Activated naive CD4-positive, alpha-beta T cell treated with anti-CD3 and anti-CD28 coated beads, Interleukin-2, amount 10 ng/mL, durations not matched to agents 7 days and 5 days (primary cell): ENCODE measurements at regions of chr17 and their contacts with region 1.

Region 1: DNA sequence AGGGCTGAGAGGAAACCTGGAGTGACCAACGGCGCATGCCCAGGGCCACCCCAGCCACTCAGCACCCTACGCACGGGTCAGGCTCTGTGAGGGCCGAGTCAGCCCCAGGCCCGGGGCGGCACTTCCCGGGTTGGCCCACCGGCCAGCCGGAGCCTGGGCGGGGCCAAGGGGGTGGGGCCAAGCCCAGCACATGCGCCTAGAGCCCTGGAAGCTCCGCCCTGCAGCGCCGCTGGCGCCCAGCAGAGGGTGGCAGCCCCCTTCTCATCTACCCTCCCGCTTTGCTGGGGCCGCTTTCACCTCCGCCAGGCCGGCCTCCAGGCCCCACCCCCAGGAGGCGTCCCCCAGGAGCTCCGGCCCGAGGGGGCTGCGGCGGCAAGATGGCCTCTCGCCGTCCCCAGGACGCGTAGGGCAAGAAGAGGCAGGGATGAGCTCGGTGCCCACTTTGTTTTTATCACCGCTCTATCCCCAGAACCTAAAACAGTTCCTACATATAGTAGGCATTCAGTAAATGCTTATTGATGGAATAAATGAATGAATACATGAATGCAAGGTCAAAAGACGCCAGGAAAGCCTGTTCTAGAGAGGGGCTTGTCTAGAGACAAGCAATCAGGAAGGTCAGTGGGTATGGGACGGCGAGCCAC is 31.3 kb downstream of the MYO18A start:
- DNase-seq: peak; percentile 95
- H3K4me3 Mint-ChIP-seq: peak overlapping the region; percentile 66
- H3K27ac Mint-ChIP-seq: peak overlapping the region; percentile 76
- H3K4me1 Mint-ChIP-seq: peaks cover 56% of the 10 kb centered on the region
- H3K27me3 Mint-ChIP-seq: no peaks in the 10 kb centered on the region

Region 2: DNA sequence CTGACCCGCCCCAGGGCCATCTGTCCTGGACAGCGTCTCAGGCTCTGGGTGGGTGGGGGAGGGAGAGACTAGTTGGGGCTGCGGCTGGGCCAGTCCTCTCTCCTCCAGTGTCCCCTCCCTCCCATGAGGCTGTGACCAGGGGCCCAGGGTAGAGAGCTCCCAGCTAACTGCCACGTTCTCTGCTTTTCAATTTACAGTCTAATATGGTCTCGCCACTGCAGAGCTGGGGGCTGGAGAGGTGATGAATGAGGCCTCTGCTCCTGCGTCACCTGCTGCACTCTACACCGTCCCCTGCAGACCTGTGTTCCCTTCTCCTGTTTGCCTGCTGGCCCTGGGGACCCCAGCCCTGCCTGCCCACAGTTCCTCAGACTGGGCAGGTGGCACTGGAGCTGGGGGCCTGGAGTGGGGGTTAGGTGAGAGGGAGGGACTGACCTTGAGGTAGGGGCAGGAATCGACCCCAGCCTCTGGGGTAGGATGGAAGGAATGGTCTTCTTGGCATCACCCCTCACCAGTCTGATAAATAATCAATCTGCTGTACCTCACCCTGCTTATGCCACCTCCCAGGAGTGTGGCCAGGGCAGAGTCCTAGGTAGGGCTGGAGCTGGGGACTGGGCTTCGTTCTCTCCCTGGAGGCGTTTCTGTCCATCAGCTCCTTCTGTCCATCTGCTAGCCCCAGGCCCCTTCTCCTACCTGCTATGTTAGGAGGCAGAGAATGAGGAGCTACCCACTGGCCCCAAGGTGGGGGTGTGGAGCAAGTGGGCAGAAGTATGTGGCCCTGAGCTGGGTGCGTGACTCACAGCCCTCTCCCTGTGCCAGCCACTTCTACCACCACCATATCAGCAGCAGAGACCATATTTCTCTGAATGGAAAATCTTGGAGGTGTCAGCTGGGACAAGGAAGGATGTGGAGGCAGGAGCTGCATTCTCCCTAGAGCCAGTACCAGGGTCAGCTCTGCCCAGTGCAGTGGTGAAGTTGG is 156.0 kb before region 1 on chr17:
- CTCF ChIA-PET with region 1: no interaction called
- DNase-seq: no peak
- H3K4me3 Mint-ChIP-seq: no peak overlapping the region
- H3K27ac Mint-ChIP-seq: no peak overlapping the region
- H3K4me1 Mint-ChIP-seq: no peaks in the 10 kb centered on the region
- H3K27me3 Mint-ChIP-seq: peaks cover 49% of the 10 kb centered on the region

Region 3: DNA sequence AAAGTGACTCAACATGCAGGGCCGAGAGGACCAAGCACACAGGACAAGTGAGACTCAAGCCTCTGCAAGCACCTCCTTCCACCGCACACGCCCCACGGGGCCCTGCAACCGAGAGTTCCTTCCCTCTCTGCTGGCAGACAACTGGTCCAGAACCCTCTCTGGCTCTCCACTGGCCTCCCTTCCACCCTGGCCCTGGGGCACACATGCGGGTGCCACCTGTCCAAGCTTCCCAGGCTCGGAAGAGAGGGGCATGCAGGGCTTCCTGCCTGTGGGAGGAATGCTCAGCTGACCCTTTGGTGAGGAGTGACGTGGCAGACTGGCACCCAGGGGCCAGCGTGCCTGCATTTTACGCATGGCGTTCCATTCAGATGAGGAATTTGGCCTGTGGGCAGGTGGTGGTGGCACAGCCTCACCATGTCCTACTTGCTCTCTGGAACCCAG is 46.1 kb before region 1 on chr17:
- CTCF ChIA-PET with region 1: no interaction called
- DNase-seq: no peak
- H3K4me3 Mint-ChIP-seq: no peak overlapping the region
- H3K27ac Mint-ChIP-seq: no peak overlapping the region
- H3K4me1 Mint-ChIP-seq: peaks cover 7% of the 10 kb centered on the region
- H3K27me3 Mint-ChIP-seq: no peaks in the 10 kb centered on the region

Region 4: GRCh38 chr17:29124117-29124924 is 24.6 kb before region 1 on chr17:
- CTCF ChIA-PET with region 1: interaction called, 482 read pairs
- DNase-seq: peak; percentile 66
- H3K4me3 Mint-ChIP-seq: no peak overlapping the region
- H3K27ac Mint-ChIP-seq: no peak overlapping the region
- H3K4me1 Mint-ChIP-seq: peaks cover 3% of the 10 kb centered on the region
- H3K27me3 Mint-ChIP-seq: no peaks in the 10 kb centered on the region

Region 5: DNA sequence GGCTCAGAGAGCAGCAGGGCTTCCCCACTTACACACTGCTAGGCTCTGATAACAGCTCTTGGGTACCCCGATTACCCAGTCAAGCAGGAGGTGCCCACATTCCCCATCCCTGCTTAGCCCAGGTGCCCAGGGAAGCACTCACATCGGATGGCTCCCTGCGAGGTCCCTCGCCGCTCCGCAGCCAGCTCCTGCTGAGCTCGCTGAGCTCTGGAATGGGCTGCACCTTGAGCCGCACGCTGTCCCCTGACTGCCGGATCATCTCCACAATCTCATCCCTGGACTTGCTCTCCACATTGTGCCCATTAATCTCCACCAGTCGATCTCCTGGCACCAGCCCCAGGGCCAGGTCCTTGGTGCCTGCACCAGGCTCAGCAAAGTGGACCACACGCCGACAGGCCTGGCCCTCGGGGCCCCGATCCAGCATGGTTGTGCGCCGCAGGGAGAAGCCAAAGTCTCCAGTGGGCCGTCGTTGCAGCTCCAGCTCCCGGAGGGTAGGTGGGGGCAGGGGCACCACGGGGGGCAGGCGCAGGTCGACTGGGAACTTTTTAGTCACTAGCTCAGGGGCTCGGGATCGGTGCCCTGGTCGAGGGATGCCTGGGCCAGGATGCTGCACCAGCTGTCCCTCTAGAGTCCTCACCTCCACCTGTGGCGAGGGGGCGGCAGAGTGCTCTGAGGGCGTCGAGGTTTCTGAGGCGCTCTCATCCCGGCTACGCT is 17.0 kb after region 1 on chr17:
- CTCF ChIA-PET with region 1: interaction called, 11 read pairs
- DNase-seq: no peak
- H3K4me3 Mint-ChIP-seq: no peak overlapping the region
- H3K27ac Mint-ChIP-seq: no peak overlapping the region
- H3K4me1 Mint-ChIP-seq: no peaks in the 10 kb centered on the region
- H3K27me3 Mint-ChIP-seq: peaks cover 7% of the 10 kb centered on the region

Region 6: GRCh38 chr17:29233301-29233700 is 84.4 kb after region 1 on chr17:
- CTCF ChIA-PET with region 1: no interaction called
- DNase-seq: no peak
- H3K4me3 Mint-ChIP-seq: no peak overlapping the region
- H3K27ac Mint-ChIP-seq: no peak overlapping the region
- H3K4me1 Mint-ChIP-seq: no peaks in the 10 kb centered on the region
- H3K27me3 Mint-ChIP-seq: no peaks in the 10 kb centered on the region

Region 7: DNA sequence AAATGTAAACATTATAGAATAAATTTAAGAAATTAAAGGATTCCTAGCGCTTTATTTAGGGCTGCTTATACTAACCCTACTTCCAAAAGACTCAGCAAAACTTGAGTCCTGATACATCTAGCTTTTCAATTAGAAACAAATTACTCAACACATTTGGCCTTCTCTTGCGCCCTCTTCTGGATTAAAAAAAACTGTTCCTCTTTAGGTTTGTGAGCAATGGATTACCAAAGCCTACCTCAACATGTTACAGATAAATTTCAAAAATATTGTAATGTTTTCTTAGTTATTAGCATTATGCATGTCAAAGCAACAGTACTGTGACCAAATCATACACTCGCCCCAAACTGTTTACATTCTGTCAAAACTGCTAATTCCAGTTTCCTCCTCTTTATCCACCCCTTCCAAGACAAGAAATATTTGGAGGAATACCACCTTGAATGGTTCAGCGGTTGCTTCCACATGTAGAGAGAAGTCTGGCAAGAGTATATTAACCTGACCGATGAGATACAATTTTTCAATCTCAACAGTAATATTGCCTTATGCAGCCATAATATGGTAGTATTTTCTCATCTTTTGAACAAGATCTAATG is 142.3 kb after region 1 on chr17:
- CTCF ChIA-PET with region 1: interaction called, 24 read pairs
- DNase-seq: no peak
- H3K4me3 Mint-ChIP-seq: peak overlapping the region; percentile 81
- H3K27ac Mint-ChIP-seq: peak overlapping the region; percentile 91
- H3K4me1 Mint-ChIP-seq: peaks cover 59% of the 10 kb centered on the region
- H3K27me3 Mint-ChIP-seq: peaks cover 4% of the 10 kb centered on the region